ENCODE measurements at regions of chr13 and their contacts with region 1.

Region 1: DNA sequence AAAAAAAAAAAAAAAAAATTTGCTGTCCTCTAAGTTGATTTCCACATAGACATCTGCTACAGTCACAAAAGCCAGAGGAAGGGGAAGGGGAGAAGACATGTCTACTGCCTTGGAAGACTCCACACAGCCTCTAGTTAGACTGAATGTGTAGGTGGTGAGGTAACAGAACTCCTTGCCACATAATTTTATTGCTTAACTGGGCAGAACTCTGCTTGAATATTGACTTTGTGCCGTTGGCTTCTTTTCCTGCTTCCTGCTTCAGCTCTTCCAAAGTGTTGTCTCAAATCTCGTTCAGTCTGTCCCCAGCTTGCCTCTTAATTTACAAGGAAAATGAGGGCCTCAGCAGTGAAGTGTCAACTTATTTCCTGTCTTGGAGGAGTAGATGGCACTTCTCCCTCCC is 37.1 kb downstream of the ESD start:
- DNase-seq: no peak
- ATAC-seq: no peak; the same call in 2 of the 3 replicates
- H3K4me3 ChIP-seq: no peak overlapping the region
- H3K27ac ChIP-seq: no peak overlapping the region
- H3K4me1 ChIP-seq: peaks cover 6% of the 10 kb centered on the region; the same call in 1 of the 2 replicates
- H3K27me3 ChIP-seq: no peaks in the 10 kb centered on the region
- CTCF ChIP-seq: no peak
- EP300 ChIP-seq: no peak
- POLR2A ChIP-seq: no peak
- RAD21 ChIP-seq: no peak

Region 2: DNA sequence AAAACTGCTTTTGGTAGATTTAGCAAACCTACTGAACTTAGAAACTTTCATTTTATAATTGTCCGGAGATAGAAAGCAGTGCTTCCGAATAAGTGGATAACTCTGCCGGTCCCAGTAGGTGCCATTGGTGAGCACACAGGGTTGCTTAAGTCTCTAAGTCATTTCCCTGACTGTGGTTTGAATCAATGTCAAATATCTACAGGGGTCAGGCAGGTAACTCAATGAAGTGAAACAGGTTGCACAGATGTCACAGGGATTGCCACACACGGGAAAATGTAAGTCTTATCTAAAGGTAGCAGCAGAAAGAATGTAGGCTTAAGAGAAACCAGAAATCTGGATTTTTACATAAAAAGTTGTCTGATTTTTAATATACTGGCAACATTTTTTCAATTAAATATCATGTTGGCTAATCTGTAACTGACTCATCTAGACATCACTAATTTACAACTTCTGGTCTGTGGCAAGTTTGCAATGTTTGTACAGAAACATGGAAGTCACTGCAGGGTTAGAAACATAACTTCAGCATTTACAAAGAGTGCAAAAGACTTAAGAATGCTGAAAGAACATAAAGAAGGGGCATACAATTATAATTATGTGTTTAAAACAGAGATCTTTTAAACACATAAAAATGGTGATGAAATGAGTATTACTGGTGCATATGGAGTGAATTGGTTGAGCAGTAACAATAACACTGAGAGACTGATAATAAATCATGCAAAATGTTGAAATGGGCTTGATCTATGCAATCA is 562.4 kb before region 1 on chr13:
- CTCF ChIA-PET with region 1: no interaction called
- POLR2A ChIA-PET with region 1: no interaction called
- in situ Hi-C with region 1: no loop called
- intact Hi-C with region 1: loop called (anchors 5 kb)
- DNase-seq: no peak
- ATAC-seq: no peak
- H3K4me3 ChIP-seq: no peak overlapping the region
- H3K27ac ChIP-seq: no peak overlapping the region
- H3K4me1 ChIP-seq: no peaks in the 10 kb centered on the region
- H3K27me3 ChIP-seq: no peaks in the 10 kb centered on the region
- CTCF ChIP-seq: no peak
- EP300 ChIP-seq: no peak
- POLR2A ChIP-seq: no peak
- RAD21 ChIP-seq: no peak

Region 3: DNA sequence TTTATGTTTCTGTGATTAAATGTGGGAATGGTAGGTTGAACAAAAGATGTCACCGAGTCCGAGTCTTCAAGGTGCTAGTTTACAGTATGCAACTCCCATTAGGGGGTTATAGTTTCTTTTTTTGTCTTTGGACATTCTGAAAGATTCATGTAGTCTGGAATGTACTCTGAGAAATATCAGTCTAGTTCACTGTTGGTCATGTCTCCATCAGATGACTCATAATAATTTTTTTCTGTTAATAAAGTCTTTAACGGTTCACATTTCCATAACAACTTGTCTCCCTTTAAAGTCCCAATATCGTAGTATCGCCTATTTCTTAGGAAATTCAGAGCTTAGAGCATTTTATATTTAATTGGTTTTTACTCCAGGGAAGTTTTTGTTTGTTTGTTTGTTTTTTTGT is 50.6 kb after region 1 on chr13:
- CTCF ChIA-PET with region 1: no interaction called
- POLR2A ChIA-PET with region 1: no interaction called
- in situ Hi-C with region 1: no loop called
- intact Hi-C with region 1: no loop called
- DNase-seq: no peak
- ATAC-seq: no peak
- H3K4me3 ChIP-seq: no peak overlapping the region
- H3K27ac ChIP-seq: no peak overlapping the region
- H3K4me1 ChIP-seq: no peaks in the 10 kb centered on the region
- H3K27me3 ChIP-seq: no peaks in the 10 kb centered on the region; a peak in 1 of 5 replicates
- CTCF ChIP-seq: no peak
- EP300 ChIP-seq: no peak
- POLR2A ChIP-seq: no peak
- RAD21 ChIP-seq: no peak

Region 4: GRCh38 chr13:46855166-46855565 is 95.3 kb after region 1 on chr13:
- CTCF ChIA-PET with region 1: no interaction called
- POLR2A ChIA-PET with region 1: no interaction called
- in situ Hi-C with region 1: no loop called
- intact Hi-C with region 1: no loop called
- DNase-seq: no peak
- ATAC-seq: no peak
- H3K4me3 ChIP-seq: no peak overlapping the region
- H3K27ac ChIP-seq: no peak overlapping the region
- H3K4me1 ChIP-seq: no peaks in the 10 kb centered on the region
- H3K27me3 ChIP-seq: peaks cover 0 to 14% of the 10 kb centered on the region in 2 experiments; a peak in 3 of 5 replicates
- CTCF ChIP-seq: no peak
- EP300 ChIP-seq: no peak
- POLR2A ChIP-seq: no peak
- RAD21 ChIP-seq: no peak

Measured in HepG2 (cell line).